ENCODE measurements at regions of chr11 and their contacts with region 1.

Region 1: DNA sequence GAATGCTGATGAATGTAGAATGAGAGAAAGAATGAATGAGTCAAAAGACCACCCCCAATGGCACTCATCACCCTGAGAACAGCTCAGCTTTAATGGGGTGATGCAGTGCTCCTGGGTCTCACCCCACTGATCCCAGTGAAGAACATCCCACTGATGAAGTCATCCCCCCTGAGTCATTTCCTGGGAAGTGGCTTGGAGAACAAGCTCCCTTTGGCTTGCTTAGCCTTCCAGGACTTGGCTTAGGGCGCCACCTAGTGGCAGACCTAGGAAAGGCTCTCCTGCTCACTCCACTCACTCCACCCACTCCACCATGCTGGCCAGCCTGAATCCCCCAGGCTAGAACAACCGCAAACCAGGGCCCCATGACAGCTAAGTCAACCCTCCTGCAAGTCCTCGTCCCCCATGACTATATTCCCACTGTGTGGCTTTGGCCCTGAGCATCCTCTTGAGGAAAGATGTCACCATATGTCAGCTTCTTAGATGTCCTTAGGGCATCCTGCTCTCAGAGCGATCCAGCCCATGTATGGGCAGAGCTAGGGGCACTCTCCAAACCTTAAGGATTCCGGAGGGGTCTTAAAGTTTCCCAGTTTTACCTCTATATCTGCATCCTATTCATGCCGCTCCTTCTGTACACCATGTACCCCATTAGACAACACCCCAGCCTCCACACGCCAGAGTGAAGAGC is 17.8 kb upstream of the TMPRSS13 start:
- DNase-seq: peak; percentile 91
- H3K4me3 Mint-ChIP-seq: no peak overlapping the region
- H3K27ac Mint-ChIP-seq: peak overlapping the region; percentile 65
- H3K4me1 Mint-ChIP-seq: peaks cover 77% of the 10 kb centered on the region
- H3K27me3 Mint-ChIP-seq: no peaks in the 10 kb centered on the region

Region 2: GRCh38 chr11:117817368-117818040 is 129.5 kb before region 1 on chr11:
- CTCF ChIA-PET with region 1: interaction called, 78 read pairs
- POLR2A ChIA-PET with region 1: interaction called, 6 read pairs
- intact Hi-C with region 1: loop called (anchors 2 kb)
- DNase-seq: peak; percentile 96
- H3K4me3 Mint-ChIP-seq: peak overlapping the region; percentile 42
- H3K27ac Mint-ChIP-seq: peak overlapping the region; percentile 94
- H3K4me1 Mint-ChIP-seq: peaks cover 62% of the 10 kb centered on the region
- H3K27me3 Mint-ChIP-seq: no peaks in the 10 kb centered on the region

Region 3: DNA sequence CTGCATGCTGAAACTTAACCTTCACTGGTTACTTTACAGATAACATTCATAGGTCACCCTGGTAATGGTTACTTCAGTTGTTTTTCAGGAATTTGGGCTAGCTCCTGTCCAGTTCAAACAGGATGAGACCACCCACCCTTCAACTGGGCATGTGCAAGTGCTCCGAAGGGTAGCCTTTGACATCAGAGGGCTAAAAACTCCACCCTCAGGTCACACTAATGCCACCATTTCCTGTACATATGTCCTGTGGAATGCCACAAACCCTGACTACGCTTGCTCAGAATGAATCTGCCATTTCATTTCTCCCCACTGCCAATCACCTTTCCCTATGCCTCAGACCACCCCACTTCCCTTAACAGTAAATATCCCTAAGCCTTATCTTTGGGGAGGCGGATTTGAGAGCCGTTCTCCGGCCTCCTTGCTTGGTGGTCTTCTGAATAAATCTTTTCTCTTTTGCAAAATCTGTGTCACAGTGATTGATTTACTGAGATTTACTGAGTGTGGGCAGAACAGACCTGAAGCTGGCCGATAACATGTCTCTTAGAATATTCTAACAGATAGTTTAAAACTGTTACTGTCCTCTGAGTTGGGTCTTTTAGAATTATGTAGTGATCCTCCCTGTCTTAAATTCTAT is 97.1 kb before region 1 on chr11:
- CTCF ChIA-PET with region 1: interaction called, 219 read pairs
- POLR2A ChIA-PET with region 1: no interaction called
- intact Hi-C with region 1: no loop called
- DNase-seq: no peak
- H3K4me3 Mint-ChIP-seq: no peak overlapping the region
- H3K27ac Mint-ChIP-seq: no peak overlapping the region
- H3K4me1 Mint-ChIP-seq: peaks cover 9% of the 10 kb centered on the region
- H3K27me3 Mint-ChIP-seq: peaks cover 4% of the 10 kb centered on the region

Region 4: DNA sequence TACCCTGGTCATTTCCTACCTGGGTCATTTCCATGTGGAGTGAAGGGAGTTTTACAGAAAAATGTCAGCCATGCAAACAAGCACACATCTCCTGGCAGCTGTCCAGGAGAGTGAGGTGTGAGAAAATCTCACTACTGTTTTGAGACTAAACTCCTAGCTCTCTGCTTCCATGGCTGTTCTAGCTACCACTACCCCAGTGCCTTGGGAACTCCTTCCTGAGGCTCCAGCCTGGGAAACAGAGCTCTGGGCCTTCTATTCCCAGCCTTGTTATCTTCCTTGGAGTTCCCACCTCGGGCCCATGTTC is 15.0 kb before region 1 on chr11:
- CTCF ChIA-PET with region 1: interaction called, 53 read pairs
- POLR2A ChIA-PET with region 1: interaction called, 3 read pairs
- intact Hi-C with region 1: loop called (anchors 2 kb)
- DNase-seq: peak; percentile 85
- H3K4me3 Mint-ChIP-seq: no peak overlapping the region
- H3K27ac Mint-ChIP-seq: peak overlapping the region; percentile 51
- H3K4me1 Mint-ChIP-seq: peaks cover 54% of the 10 kb centered on the region
- H3K27me3 Mint-ChIP-seq: no peaks in the 10 kb centered on the region

Region 5: DNA sequence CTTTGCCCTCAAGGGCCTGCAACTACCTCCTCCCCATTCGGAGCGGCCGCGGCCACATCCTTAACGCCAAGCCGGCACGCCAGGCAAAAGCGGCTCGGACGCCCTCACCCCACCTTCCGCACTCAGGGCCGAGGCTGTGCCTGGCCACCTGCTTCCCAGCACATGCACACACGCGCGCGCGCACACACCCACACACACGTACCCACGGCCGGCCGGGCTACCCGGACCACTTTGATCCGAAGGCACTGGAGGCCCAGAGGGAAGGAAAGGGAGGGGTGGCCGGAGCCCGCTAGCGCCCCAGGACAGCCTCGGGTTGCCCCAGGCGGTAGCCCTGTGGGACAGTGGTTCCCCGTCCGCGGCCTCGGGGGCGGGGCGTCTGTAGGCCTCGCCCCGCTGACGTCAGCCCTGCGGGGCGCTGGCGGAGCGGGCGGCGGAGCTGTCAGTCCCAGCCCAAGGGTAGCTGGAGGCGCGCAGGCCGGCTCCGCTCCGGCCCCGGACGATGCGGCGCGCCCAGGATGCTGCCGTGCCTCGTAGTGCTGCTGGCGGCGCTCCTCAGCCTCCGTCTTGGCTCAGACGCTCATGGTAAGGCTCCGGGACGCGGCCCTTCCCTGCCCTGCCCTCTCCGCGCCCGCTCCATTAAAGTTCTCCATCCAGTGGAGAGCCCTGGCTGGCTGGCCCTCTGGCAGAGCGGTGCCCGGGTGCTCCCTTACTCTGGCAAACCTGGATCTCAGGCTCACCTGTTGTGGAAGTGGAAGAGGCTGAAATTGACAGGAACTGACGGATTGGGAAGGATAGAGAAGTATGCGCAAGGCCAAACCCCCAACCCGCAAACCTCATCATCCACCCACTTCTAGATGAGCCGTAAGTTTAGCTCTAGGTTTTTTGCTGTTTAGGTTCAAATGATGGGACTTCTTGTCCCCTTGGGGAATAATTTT is 39.2 kb after region 1 on chr11 and contains the start of gene IL10RA:
- CTCF ChIA-PET with region 1: interaction called, 92 read pairs
- POLR2A ChIA-PET with region 1: interaction called, 34 read pairs
- intact Hi-C with region 1: loop called (anchors 1 kb)
- DNase-seq: peak; percentile 91
- H3K4me3 Mint-ChIP-seq: peak within 1 kb of the TSS; percentile 82
- H3K27ac Mint-ChIP-seq: peak within 1 kb of the TSS; percentile 97
- H3K4me1 Mint-ChIP-seq: peaks cover 69% of the 10 kb centered on the region
- H3K27me3 Mint-ChIP-seq: no peaks in the 10 kb centered on the region
- total RNA-seq, gene IL10RA: 114 to 117 TPM

Region 6: GRCh38 chr11:118051611-118052461 is 104.9 kb after region 1 on chr11:
- CTCF ChIA-PET with region 1: interaction called, 248 read pairs
- POLR2A ChIA-PET with region 1: interaction called, 5 read pairs
- intact Hi-C with region 1: loop called (anchors 1 kb)
- DNase-seq: peak; percentile 82
- H3K4me3 Mint-ChIP-seq: peak overlapping the region; percentile 41
- H3K27ac Mint-ChIP-seq: peak overlapping the region; percentile 84
- H3K4me1 Mint-ChIP-seq: peaks cover 56% of the 10 kb centered on the region
- H3K27me3 Mint-ChIP-seq: no peaks in the 10 kb centered on the region

Measured in activated CD4-positive, alpha-beta memory T cell treated with anti-CD3 and anti-CD28 coated beads for 36 hours (primary cell).